K562 (cell line): ENCODE measurements at regions of chr5 and their contacts with region 1.

Region 1: GRCh38 chr5:139301808-139302499 is 8.4 kb downstream of the MATR3 start:
- DNase-seq: no peak
- ATAC-seq: peak; percentile 4
- H3K4me3 ChIP-seq: no peak overlapping the region
- H3K27ac ChIP-seq: 0 out of 3 replicates have a peak overlapping the region, but pooled peaks have one; percentile 2
- H3K4me1 ChIP-seq: peaks cover 15 to 51% of the 10 kb centered on the region in 2 experiments
- H3K27me3 ChIP-seq: no peaks in the 10 kb centered on the region
- CTCF ChIP-seq: no peak
- EP300 ChIP-seq: no peak
- POLR2A ChIP-seq: no peak
- RAD21 ChIP-seq: no peak

Region 2: GRCh38 chr5:139312075-139312474 is 10.1 kb after region 1 on chr5:
- CTCF ChIA-PET with region 1: no interaction called
- POLR2A ChIA-PET with region 1: interaction called, 105 read pairs
- in situ Hi-C with region 1: no loop called
- intact Hi-C with region 1: no loop called
- DNase-seq: no peak
- ATAC-seq: peak; percentile 8; the same call in 2 of the 3 replicates
- H3K4me3 ChIP-seq: no peak overlapping the region
- H3K27ac ChIP-seq: no peak overlapping the region
- H3K4me1 ChIP-seq: peaks cover 3% of the 10 kb centered on the region in 2 experiments; a peak in 3 of 5 replicates
- H3K27me3 ChIP-seq: no peaks in the 10 kb centered on the region
- CTCF ChIP-seq: no peak
- EP300 ChIP-seq: no peak
- POLR2A ChIP-seq: no peak
- RAD21 ChIP-seq: no peak